CD8-positive, alpha-beta T cell (primary cell): ENCODE measurements at regions of chr3 and their contacts with region 1.

Region 1: GRCh38 chr3:46065294-46065721 is 38.0 kb upstream of the XCR1 start:
- DNase-seq: peak; percentile 62 to 97 (median 79)
- ATAC-seq: peak; percentile 87
- H3K4me3 ChIP-seq: no peak overlapping the region
- H3K4me3 Mint-ChIP-seq: peak overlapping the region; percentile 37
- H3K27ac ChIP-seq: peak overlapping the region in 1 of 2 experiments; percentile 63
- H3K27ac Mint-ChIP-seq: peak overlapping the region; percentile 88
- H3K4me1 ChIP-seq: peaks cover 78% of the 10 kb centered on the region
- H3K4me1 Mint-ChIP-seq: peaks cover 76% of the 10 kb centered on the region
- H3K27me3 ChIP-seq: no peaks in the 10 kb centered on the region
- H3K27me3 Mint-ChIP-seq: no peaks in the 10 kb centered on the region
- CTCF ChIP-seq: no peak

Region 2: GRCh38 chr3:45948311-45948781 is 117.0 kb before region 1 on chr3:
- CTCF ChIA-PET with region 1: interaction called, 7 read pairs
- POLR2A ChIA-PET with region 1: interaction called, 13 read pairs
- intact Hi-C with region 1: no loop called
- DNase-seq: no peak
- ATAC-seq: no peak
- H3K4me3 ChIP-seq: no peak overlapping the region
- H3K4me3 Mint-ChIP-seq: no peak overlapping the region
- H3K27ac ChIP-seq: peak overlapping the region in 1 of 2 experiments; percentile 73
- H3K27ac Mint-ChIP-seq: peak overlapping the region; percentile 85
- H3K4me1 ChIP-seq: peaks cover 54% of the 10 kb centered on the region
- H3K4me1 Mint-ChIP-seq: peaks cover 90% of the 10 kb centered on the region
- H3K27me3 ChIP-seq: no peaks in the 10 kb centered on the region
- H3K27me3 Mint-ChIP-seq: no peaks in the 10 kb centered on the region
- CTCF ChIP-seq: no peak

Region 3: DNA sequence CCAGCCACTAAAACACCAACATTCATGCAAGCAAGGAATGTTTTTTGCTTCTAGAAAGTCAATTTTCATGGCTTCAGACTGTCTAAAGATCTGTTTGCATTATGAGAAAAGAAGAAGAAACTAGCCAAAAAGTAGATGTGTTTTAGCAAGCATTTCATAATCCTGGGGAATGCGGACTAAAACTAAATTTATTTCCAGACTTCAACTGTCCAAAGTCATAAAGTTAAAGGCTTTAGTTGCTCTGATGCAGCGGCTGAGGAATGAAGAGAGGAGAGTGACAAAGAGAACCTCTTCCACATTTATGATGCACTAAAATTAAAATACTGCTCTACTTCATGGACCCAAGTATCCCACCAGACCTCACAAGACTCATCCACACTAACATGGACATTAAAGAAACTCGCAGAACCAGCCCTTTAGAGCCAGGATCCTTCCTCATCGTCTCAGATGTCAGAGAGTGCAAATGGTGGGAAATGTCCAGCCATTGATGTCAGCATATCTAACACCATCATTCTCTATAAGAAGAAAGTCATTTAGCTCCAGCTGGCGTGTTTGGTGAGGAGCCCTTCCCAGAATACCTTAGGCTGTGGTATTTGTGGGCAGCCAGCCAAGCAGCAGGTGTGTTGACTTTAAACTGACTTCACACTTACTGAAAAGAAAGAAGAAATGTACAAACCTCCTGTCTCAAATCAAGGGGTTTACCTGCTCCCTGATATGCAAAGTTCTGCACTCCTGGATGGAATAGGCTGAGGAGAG is 87.1 kb before region 1 on chr3:
- CTCF ChIA-PET with region 1: interaction called, 6 read pairs
- POLR2A ChIA-PET with region 1: interaction called, 10 read pairs
- intact Hi-C with region 1: loop called in 1 of 2 experiments (anchors 2 kb)
- DNase-seq: peak in 7 of 9 experiments; percentile 29 to 66 (median 57)
- ATAC-seq: no peak
- H3K4me3 ChIP-seq: no peak overlapping the region
- H3K4me3 Mint-ChIP-seq: peak overlapping the region; percentile 47
- H3K27ac ChIP-seq: peak overlapping the region in 1 of 2 experiments; percentile 60
- H3K27ac Mint-ChIP-seq: peak overlapping the region; percentile 93
- H3K4me1 ChIP-seq: peaks cover 46% of the 10 kb centered on the region
- H3K4me1 Mint-ChIP-seq: peaks cover 76% of the 10 kb centered on the region
- H3K27me3 ChIP-seq: no peaks in the 10 kb centered on the region
- H3K27me3 Mint-ChIP-seq: no peaks in the 10 kb centered on the region
- CTCF ChIP-seq: no peak

Region 4: GRCh38 chr3:46049116-46049515 is 16.2 kb before region 1 on chr3:
- CTCF ChIA-PET with region 1: interaction called, 3 read pairs
- POLR2A ChIA-PET with region 1: interaction called, 10 read pairs
- intact Hi-C with region 1: loop called in 1 of 2 experiments (anchors 2 kb)
- DNase-seq: no peak
- ATAC-seq: no peak
- H3K4me3 ChIP-seq: no peak overlapping the region
- H3K4me3 Mint-ChIP-seq: no peak overlapping the region
- H3K27ac ChIP-seq: no peak overlapping the region
- H3K27ac Mint-ChIP-seq: no peak overlapping the region
- H3K4me1 ChIP-seq: peaks cover 22% of the 10 kb centered on the region
- H3K4me1 Mint-ChIP-seq: peaks cover 37% of the 10 kb centered on the region
- H3K27me3 ChIP-seq: no peaks in the 10 kb centered on the region
- H3K27me3 Mint-ChIP-seq: no peaks in the 10 kb centered on the region
- CTCF ChIP-seq: no peak